Activated CD4-positive, alpha-beta memory T cell treated with anti-CD3 and anti-CD28 coated beads for 36 hours (primary cell): ENCODE measurements at regions of chr1 and their contacts with region 1.

Region 1: GRCh38 chr1:8987881-8988617 is 38.2 kb downstream of the SLC2A7 start:
- DNase-seq: peak; percentile 80
- H3K4me3 Mint-ChIP-seq: no peak overlapping the region
- H3K27ac Mint-ChIP-seq: no peak overlapping the region
- H3K4me1 Mint-ChIP-seq: peaks cover 34% of the 10 kb centered on the region
- H3K27me3 Mint-ChIP-seq: no peaks in the 10 kb centered on the region

Region 2: DNA sequence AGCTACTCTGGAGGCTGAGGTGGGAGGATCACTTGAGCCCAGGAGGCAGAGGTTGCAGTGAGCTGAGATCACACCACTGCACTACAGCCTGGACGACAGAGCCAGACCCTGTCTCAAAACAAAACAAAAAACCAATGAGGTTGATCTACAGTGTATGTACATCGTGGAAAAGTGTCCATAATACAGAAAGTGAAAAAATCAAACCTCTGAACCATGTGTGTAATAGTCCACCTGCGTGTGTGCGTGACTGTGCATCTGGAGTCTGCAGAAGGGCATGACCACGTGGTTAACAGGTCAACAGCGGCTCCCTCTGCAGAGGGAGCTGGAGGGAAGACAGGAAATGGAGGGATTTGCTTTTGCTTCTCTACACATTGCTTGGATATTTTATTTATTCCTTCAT is 77.1 kb before region 1 on chr1:
- CTCF ChIA-PET with region 1: interaction called, 204 read pairs
- POLR2A ChIA-PET with region 1: no interaction called
- intact Hi-C with region 1: no loop called
- DNase-seq: no peak
- H3K4me3 Mint-ChIP-seq: no peak overlapping the region
- H3K27ac Mint-ChIP-seq: no peak overlapping the region
- H3K4me1 Mint-ChIP-seq: peaks cover 3% of the 10 kb centered on the region
- H3K27me3 Mint-ChIP-seq: peaks cover 3% of the 10 kb centered on the region

Region 3: GRCh38 chr1:8962812-8963530 is 25.1 kb before region 1 on chr1:
- CTCF ChIA-PET with region 1: interaction called, 33 read pairs
- POLR2A ChIA-PET with region 1: no interaction called
- intact Hi-C with region 1: loop called (anchors 2 kb)
- DNase-seq: peak; percentile 66
- H3K4me3 Mint-ChIP-seq: no peak overlapping the region
- H3K27ac Mint-ChIP-seq: peak overlapping the region; percentile 52
- H3K4me1 Mint-ChIP-seq: peaks cover 64% of the 10 kb centered on the region
- H3K27me3 Mint-ChIP-seq: no peaks in the 10 kb centered on the region

Region 4: GRCh38 chr1:8970870-8971337 is 17.1 kb before region 1 on chr1:
- CTCF ChIA-PET with region 1: interaction called, 6 read pairs
- POLR2A ChIA-PET with region 1: no interaction called
- intact Hi-C with region 1: loop called (anchors 2 kb)
- DNase-seq: peak; percentile 73
- H3K4me3 Mint-ChIP-seq: peak overlapping the region; percentile 91
- H3K27ac Mint-ChIP-seq: peak overlapping the region; percentile 87
- H3K4me1 Mint-ChIP-seq: peaks cover 42% of the 10 kb centered on the region
- H3K27me3 Mint-ChIP-seq: no peaks in the 10 kb centered on the region